ENCODE measurements at regions of chr5 and their contacts with region 1.

Region 1: DNA sequence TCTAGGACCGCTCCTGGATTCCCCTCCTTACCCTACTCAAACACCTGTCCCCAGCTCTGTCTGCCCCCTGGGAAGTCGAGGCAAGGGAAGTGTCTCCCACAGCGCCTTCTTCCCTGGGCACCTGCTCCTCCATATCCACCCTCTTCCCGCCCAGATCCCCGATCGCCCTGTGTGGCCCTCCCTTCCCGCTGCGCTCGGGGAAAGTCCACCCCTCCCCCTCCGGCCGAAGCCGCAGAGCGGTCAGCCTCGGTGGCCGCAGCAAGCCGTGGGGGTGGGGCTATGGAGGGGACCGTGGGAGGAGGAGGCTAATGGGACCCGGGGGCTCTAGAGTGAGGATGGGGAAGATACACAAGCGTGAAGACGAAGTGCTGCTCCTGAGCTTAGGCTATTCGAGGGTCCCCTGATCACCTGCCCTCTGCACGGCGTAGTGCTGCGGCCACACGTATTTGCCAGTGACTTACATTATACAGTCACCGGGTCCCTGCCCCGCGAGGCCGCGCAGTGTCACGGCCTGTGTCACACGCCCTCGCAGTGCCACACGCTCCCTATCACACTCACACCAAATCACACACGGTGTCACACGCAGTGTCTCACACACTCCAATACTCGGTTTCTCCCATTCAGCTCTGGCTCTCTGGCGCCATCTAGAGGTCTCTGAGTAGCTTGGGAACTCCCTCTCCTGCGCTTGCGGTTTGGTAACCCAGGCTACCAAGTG is 658 bp upstream of the PCDH1 start:
- DNase-seq: peak; percentile 91 to 96
- H3K4me3 ChIP-seq: peak overlapping the region in 2 of 3 donors; percentile 36 to 62
- H3K27ac ChIP-seq: peak overlapping the region; percentile 47 to 87 (median 80)
- H3K4me1 ChIP-seq: peaks cover 17 to 21% of the 10 kb centered on the region in 2 donors
- H3K27me3 ChIP-seq: no peaks in the 10 kb centered on the region
- CTCF ChIP-seq: peak; percentile 92 to 99 (median 95)
- POLR2A ChIP-seq: no peak

Region 2: DNA sequence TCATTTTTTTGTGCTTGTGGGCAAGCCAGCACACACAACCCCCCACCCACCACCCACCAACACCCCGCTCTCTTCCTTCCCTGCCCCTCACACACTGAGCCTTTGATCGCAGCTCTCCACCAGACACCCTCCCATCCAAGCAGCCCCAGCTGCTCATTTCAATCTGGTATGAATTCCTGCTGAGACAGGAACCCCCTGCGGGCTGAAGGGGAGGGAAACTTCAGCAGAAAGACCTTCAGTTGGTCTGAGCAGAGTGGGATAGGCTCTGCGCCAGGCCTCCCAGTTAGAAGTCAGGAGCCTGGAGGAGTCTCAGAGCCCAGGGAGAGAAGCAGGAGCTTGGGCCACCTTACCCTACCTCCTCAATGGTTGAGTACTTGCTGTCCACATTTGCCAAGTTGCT is 382.8 kb before region 1 on chr5:
- intact Hi-C with region 1: no loop called
- DNase-seq: no peak
- H3K4me3 ChIP-seq: no peak overlapping the region
- H3K27ac ChIP-seq: no peak overlapping the region
- H3K4me1 ChIP-seq: peaks cover 9 to 16% of the 10 kb centered on the region in 2 donors
- H3K27me3 ChIP-seq: no peaks in the 10 kb centered on the region
- CTCF ChIP-seq: no peak
- POLR2A ChIP-seq: no peak

Region 3: GRCh38 chr5:141691867-141692532 is 186.9 kb before region 1 on chr5:
- intact Hi-C with region 1: loop called (anchors 2 kb)
- DNase-seq: peak; percentile 81 to 83
- H3K4me3 ChIP-seq: no peak overlapping the region
- H3K27ac ChIP-seq: no peak overlapping the region
- H3K4me1 ChIP-seq: peaks cover 0 to 4% of the 10 kb centered on the region in 2 donors
- H3K27me3 ChIP-seq: no peaks in the 10 kb centered on the region
- CTCF ChIP-seq: peak; percentile 96 to 99 (median 98)
- POLR2A ChIP-seq: no peak

Region 4: DNA sequence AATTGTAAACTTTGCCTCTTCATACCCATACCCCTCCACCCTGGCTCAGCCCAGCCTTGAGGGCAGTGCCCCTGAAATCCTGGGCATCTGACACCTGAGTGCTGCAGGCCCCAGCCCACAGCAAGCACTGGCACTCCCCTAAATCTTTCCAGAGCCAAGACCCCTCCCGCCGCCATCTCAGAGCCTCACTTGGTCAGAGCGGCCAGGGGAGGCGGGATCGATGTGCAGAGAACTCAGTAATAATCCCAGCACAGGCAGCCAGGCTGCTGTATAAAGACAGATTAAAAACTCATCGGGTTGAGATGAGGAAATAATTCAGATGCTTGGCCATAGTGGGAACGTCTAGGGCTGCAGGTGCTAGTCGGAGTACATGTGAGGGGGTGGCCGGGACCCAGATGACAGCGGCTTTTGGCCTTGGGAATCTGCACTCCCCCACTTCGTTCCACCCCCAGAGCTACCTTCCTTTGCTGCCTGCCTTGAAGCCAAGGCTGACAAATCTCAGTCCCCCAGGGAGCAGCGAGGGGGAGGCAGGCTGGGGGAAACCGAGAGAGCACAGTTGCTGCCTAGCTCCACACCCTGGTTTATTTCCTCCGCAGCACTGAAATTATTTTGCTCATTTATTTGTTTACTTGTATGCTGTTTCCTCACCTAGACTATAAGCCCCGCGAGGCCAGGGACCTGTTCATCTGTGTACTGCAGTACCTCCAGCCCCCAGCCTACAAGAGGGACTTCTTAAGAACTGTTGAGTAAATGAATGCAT is 177.3 kb before region 1 on chr5:
- intact Hi-C with region 1: loop called (anchors 2 kb)
- DNase-seq: no peak
- H3K4me3 ChIP-seq: no peak overlapping the region
- H3K27ac ChIP-seq: no peak overlapping the region
- H3K4me1 ChIP-seq: peaks cover 5 to 18% of the 10 kb centered on the region in 2 donors
- H3K27me3 ChIP-seq: no peaks in the 10 kb centered on the region
- CTCF ChIP-seq: no peak
- POLR2A ChIP-seq: no peak

Region 5: GRCh38 chr5:141747152-141748141 is 131.4 kb before region 1 on chr5:
- intact Hi-C with region 1: no loop called
- DNase-seq: peak; percentile 97 to 98
- H3K4me3 ChIP-seq: no peak overlapping the region
- H3K27ac ChIP-seq: no peak overlapping the region
- H3K4me1 ChIP-seq: peaks cover 0 to 7% of the 10 kb centered on the region in 2 donors
- H3K27me3 ChIP-seq: no peaks in the 10 kb centered on the region
- CTCF ChIP-seq: no peak
- POLR2A ChIP-seq: no peak

Region 6: DNA sequence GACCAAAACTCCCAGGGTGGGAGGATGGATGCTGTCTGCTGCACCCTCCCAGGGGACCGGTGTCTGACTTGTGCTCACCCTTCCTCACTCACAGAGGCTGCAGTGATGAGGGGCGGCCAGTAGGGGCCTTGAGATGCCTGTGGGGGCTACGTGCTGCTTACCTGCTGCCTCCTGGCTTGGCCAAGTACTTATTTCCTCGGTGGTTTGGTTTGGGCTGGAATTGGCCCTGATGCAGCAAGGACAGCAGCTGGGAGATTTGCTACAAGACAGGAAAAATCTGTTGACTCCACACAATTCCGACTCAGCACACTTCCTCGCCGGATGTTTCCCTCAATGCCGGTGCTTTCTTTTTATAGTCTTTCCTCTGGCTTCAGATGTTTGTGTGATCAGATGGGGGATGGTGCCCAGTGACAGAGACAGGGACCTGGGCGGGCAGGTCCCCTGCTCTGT is 72.5 kb after region 1 on chr5:
- intact Hi-C with region 1: loop called (anchors 10 kb)
- DNase-seq: no peak
- H3K4me3 ChIP-seq: no peak overlapping the region
- H3K27ac ChIP-seq: peak overlapping the region in 1 of 3 donors; percentile 5
- H3K4me1 ChIP-seq: peaks cover 0 to 5% of the 10 kb centered on the region in 2 donors
- H3K27me3 ChIP-seq: no peaks in the 10 kb centered on the region
- CTCF ChIP-seq: peak in 1 of 6 experiments; percentile 12
- POLR2A ChIP-seq: no peak